Dorsolateral prefrontal cortex (tissue), 120 donors: ENCODE measurements at regions of chr6 and their contacts with region 1.

Region 1: DNA sequence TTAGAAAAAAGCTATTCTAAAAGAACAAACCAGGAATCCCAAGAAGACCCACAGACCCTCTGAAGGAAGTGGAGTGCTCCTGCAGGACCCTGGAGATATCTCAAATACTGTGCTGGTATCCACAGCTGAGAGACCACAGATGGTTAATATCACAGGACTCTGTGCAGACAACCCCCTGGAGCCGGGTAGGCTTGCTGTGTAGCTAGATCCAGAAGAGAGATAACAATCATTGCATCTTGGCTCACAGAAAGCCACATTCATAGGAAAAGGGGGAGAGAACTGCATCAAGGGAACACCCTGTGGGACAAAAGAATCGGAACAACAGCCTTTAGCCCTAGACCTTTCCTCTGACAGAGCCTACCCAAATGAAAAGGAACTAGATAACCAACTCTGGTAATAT is 689.5 kb downstream of the PHF3 start:
- DNase-seq: no peak
- H3K4me3 ChIP-seq: no peak overlapping the region
- H3K27ac ChIP-seq: no peak overlapping the region
- H3K27me3 ChIP-seq: no peaks in the 10 kb centered on the region
- CTCF ChIP-seq: no peak

Region 2: GRCh38 chr6:64000873-64001491 is 324.1 kb before region 1 on chr6:
- intact Hi-C with region 1: loop called in 1 of 2 experiments (anchors 10 kb)
- DNase-seq: no peak
- H3K4me3 ChIP-seq: no peak overlapping the region
- H3K27ac ChIP-seq: no peak overlapping the region
- H3K27me3 ChIP-seq: no peaks in the 10 kb centered on the region
- CTCF ChIP-seq: no peak

Region 3: GRCh38 chr6:64415926-64416325 is 90.8 kb after region 1 on chr6:
- intact Hi-C with region 1: no loop called
- DNase-seq: no peak
- H3K4me3 ChIP-seq: no peak overlapping the region
- H3K27ac ChIP-seq: peak overlapping the region in 4 of 59 donors; percentile 9 to 44 (median 22)
- H3K27me3 ChIP-seq: no peaks in the 10 kb centered on the region
- CTCF ChIP-seq: no peak

Region 4: DNA sequence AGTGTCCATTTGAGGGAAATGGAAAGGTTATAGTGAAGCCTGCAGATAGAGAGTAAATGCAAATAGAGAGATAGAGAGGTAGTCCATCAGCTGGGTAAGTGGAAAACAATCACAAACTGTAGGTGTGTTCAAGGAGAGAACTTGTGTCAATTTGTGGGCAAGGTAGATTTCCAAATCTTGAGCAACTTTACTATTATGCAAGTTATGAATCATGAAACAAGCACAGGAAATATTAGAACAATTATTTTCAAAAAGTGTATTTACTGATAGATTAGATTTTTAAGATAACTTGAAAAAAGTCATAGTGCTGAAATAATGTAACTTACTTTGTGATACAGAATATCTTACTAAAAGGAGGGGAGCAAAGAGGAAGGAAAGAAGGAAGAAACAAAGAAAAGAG is 589.0 kb after region 1 on chr6:
- intact Hi-C with region 1: no loop called
- DNase-seq: no peak
- H3K4me3 ChIP-seq: no peak overlapping the region
- H3K27ac ChIP-seq: no peak overlapping the region
- H3K27me3 ChIP-seq: no peaks in the 10 kb centered on the region
- CTCF ChIP-seq: no peak